HEK293T (cell line): ENCODE measurements at regions of chr1 and their contacts with region 1.

Region 1: GRCh38 chr1:207605444-207606361 is 39.2 kb upstream of the CR1L start:
- DNase-seq: no peak

Region 2: GRCh38 chr1:207619871-207620542 is 14.3 kb after region 1 on chr1:
- CTCF ChIA-PET with region 1: interaction called, 13 read pairs
- POLR2A ChIA-PET with region 1: no interaction called
- DNase-seq: peak; percentile 63